RWPE1 (cell line): ENCODE measurements at regions of chr2 and their contacts with region 1.

Region 1: DNA sequence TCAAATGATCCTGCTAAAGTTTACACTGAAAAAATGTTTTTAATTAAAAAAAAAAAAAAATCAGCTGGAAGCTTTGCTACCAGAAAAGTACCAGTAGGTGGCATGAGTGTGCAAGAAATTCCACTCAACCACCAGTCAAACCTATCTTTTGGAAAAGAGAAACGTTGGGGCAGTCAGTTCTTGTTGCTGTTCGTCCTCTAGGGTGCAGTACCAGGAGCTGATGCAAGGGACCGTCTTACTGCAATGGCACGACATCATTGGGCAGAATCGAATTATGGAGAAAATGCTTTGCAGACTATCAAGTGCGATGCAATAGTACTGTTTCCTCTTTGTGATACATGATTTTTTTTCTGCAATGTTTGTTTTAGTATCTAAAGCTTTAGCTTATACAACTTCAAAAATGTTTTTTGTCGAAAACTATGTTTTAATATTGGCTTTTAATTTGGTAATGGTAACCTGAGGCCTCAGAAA is 18.3 kb downstream of the YPEL5 start:
- DNase-seq: peak; percentile 86
- H3K27ac ChIP-seq: no peak overlapping the region
- CTCF ChIP-seq: peak; percentile 87

Region 2: DNA sequence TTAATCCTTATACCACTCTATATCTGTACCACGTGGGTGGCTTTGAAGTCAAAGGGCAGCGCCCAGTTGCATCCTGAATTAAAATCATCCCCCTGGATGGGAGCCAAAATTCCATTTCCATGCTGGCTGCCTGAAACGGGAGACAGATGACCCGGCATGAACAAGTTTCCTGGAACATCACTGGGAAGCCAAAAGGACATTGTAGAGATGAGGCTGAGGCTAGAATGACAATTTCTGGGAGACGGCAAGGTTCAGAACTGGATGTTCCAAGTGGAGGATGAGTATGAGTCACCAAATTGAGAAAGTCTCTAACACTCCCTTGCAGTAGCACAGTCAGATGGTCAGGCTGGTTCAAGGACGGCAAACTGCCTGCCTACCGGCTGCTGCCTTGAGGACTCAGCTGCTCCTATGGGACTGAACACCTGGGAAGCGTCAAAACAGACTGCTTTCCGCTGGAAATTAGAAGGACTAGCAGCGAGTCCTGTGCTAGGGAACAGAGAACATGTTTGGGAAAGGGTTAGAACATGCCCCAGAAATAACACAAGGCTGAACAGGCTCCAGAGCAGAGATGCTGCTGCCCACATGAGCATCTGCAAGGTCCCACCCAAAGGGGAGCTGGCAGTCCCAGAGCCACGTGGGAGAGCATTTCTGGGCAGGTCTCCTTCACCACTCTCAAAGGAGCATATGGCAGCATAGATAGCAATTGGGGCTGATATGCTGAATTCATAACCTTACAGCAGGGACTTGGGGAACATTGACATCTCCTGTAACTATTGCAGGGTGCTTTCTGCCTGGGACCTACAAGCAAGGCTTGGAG is 13.7 kb after region 1 on chr2:
- CTCF ChIA-PET with region 1: interaction called, 12 read pairs
- POLR2A ChIA-PET with region 1: no interaction called
- DNase-seq: peak; percentile 65
- H3K27ac ChIP-seq: peak overlapping the region; percentile 91
- CTCF ChIP-seq: no peak

Region 3: GRCh38 chr2:30208452-30208851 is 43.4 kb after region 1 on chr2:
- CTCF ChIA-PET with region 1: interaction called, 10 read pairs
- POLR2A ChIA-PET with region 1: no interaction called
- DNase-seq: peak; percentile 64
- H3K27ac ChIP-seq: no peak overlapping the region
- CTCF ChIP-seq: peak; percentile 87